ENCODE measurements at regions of chr1 and their contacts with region 1.

Region 1: DNA sequence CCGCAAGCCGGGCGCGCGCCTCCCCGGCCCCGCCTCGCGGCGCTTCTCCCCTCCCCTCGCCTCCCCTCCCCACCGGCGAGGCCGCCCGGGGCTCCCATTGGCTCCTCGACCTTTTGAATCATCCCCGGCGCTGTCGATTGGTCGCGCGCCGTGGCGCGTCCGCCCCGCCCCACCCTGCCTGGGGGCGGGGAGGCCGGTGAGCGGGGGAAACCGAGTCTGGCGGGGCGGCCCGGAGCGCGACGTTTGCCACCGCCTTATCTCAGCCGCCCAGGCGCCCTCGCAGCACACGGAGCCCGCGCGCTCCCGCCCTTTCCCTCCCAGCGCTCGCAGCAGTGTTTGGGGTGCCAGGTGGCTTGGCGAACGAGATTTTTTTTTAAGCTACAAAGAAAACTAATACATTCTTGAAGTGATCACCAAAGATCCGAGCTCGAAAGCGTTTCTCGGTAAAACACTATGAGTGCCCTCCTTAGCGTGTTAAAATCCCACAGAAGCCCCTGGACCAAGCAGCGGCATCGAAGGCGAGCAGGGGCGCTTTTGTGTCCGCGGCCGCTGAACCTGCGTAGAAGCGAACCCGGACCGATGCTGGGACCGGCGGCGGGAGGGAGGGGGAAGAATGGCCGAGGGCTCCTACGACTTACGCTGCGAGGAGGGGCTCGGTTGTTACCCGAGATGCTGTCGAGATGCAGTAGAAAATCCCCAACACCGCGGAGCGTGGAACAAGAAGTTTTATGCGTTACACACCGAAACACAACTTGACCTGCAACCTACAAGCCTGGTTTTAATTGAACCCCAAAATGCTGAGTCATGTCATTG is 436 bp upstream of the LBR start:
- DNase-seq: peak; percentile 91
- ATAC-seq: peak; percentile 94
- H3K4me3 Mint-ChIP-seq: peak overlapping the region; percentile 99
- H3K27ac Mint-ChIP-seq: peak overlapping the region; percentile 90
- H3K4me1 Mint-ChIP-seq: peaks cover 47% of the 10 kb centered on the region
- H3K27me3 Mint-ChIP-seq: no peaks in the 10 kb centered on the region
- CTCF ChIP-seq: no peak

Region 2: GRCh38 chr1:225400968-225401367 is 27.3 kb before region 1 on chr1:
- CTCF ChIA-PET with region 1: no interaction called
- POLR2A ChIA-PET with region 1: no interaction called
- intact Hi-C with region 1: no loop called
- DNase-seq: no peak
- ATAC-seq: no peak
- H3K4me3 Mint-ChIP-seq: no peak overlapping the region
- H3K27ac Mint-ChIP-seq: no peak overlapping the region
- H3K4me1 Mint-ChIP-seq: peaks cover 10% of the 10 kb centered on the region
- H3K27me3 Mint-ChIP-seq: no peaks in the 10 kb centered on the region
- CTCF ChIP-seq: no peak

Region 3: DNA sequence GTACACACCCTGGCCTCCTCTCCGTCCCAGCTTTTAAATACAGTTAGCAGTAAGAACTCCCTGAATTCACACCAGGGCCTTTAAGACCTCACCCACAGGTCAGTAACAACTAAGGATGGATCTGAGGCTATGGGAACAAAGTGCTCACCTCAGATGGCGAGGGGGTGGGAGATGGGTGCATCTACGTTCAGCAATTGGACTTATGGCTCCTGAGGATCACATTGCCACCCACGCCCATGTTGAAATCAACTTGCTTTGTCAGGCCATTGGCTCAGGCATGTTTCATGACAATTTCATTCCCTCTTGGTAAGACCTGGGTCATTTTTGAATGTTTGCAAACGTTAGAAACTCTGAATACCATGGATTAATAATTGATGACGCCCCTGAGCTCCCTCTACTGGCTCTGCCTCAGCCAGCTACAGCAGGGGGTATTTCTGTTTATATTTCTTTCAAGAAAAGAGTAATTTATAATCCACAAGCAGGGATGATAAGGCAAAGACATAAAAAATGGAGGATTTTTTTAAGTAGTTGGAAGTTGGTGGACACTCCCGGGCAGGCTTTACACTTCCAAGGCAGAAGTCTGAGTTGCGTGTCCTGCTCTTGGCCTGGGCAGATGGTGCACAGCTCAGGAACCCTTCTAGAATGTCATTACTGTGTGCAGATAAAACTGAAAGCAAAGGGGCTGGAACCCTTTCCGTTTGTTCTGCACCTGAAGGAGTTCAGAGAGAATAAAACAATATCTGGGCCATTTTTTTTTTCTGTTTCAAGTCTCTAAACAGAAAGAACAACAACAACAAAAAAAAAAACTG is 13.2 kb after region 1 on chr1:
- CTCF ChIA-PET with region 1: interaction called, 12 read pairs
- POLR2A ChIA-PET with region 1: interaction called, 109 read pairs
- intact Hi-C with region 1: no loop called
- DNase-seq: no peak
- ATAC-seq: no peak
- H3K4me3 Mint-ChIP-seq: peak overlapping the region; percentile 28
- H3K27ac Mint-ChIP-seq: peak overlapping the region; percentile 79
- H3K4me1 Mint-ChIP-seq: peaks cover 51% of the 10 kb centered on the region
- H3K27me3 Mint-ChIP-seq: no peaks in the 10 kb centered on the region
- CTCF ChIP-seq: peak; percentile 34

Region 4: DNA sequence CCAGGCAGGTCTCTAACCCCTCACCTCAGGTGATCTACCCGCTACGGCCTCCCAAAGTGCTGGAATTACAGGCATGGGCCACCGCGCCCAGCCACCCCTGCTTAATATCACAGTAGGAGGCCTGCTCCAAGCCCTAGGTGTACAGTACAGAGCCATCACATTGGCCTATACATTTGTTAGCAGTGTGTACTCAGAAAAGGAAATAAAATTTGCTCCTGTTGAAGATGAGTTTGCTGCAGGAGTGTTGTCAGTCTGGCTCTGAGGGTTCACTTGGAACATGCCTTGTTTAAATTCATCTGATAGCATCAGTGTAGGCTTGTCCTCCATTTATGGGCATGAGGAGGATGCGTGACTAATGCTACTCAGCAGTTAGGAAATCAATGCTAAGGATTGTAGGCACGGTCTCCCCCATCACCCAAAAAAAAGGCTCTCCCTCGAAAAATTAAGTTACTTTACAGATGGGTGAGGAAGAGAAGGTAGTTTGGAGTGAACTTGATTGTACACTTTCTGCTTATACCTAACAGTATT is 229.3 kb after region 1 on chr1:
- CTCF ChIA-PET with region 1: no interaction called
- POLR2A ChIA-PET with region 1: no interaction called
- intact Hi-C with region 1: no loop called
- DNase-seq: no peak
- ATAC-seq: no peak
- H3K4me3 Mint-ChIP-seq: no peak overlapping the region
- H3K27ac Mint-ChIP-seq: no peak overlapping the region
- H3K4me1 Mint-ChIP-seq: peaks cover 2% of the 10 kb centered on the region
- H3K27me3 Mint-ChIP-seq: peaks cover 9% of the 10 kb centered on the region
- CTCF ChIP-seq: no peak